CD4-positive, alpha-beta T cell (primary cell): ENCODE measurements at regions of chr6 and their contacts with region 1.

Region 1: DNA sequence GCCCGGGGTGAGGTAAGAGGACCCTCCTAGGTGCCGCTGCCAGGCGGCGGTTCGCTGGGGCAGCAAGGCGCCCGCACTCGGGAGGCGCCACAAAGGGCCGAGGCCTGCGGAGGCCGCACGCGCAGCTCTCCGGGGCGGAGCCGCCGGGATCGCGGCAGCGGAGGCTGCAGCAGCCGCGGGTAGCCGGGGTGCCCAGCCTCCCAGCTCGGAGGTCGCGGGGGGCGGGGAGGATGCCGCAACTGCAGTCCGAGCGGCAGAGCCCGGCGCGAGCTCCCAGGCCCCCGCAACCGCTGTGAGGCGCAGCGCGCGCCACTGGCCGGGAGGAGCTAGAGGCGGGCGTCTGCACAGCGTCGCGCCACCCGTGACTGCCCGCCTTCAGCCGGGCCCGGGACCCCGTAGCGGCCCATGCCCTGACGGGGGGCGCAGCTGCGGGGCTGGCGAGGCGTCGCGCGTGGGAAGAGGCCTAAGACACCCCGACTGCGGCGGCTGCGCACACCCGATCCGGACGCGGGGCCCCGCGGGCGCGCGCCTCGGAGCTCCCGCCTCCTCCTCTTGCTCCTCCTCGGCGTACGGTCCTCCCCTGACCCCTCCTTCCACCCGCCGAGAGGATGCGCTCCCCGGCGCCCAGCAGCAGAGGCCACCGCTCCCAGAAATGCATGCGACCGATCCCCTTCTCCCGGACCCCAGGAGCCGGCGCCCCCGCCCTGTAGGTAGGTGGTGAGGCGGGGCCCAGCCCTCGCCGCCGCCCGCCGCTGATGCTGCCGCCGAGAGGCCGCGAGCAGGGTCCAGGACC is at the start of gene NCOA7:
- DNase-seq: peak; percentile 68 to 91 (median 79)
- ATAC-seq: peak; percentile 74
- H3K4me3 ChIP-seq: peak within 1 kb of the TSS; percentile 83
- H3K4me3 Mint-ChIP-seq: peak within 1 kb of the TSS; percentile 94
- H3K27ac ChIP-seq: peak within 1 kb of the TSS; percentile 82 to 86
- H3K27ac Mint-ChIP-seq: peak within 1 kb of the TSS; percentile 99
- H3K4me1 ChIP-seq: peaks cover 25% of the 10 kb centered on the region
- H3K4me1 Mint-ChIP-seq: peaks cover 61% of the 10 kb centered on the region
- H3K27me3 ChIP-seq: no peaks in the 10 kb centered on the region
- H3K27me3 Mint-ChIP-seq: no peaks in the 10 kb centered on the region
- CTCF ChIP-seq: no peak
- total RNA-seq, gene NCOA7: 34.6 to 35.7 TPM

Region 2: GRCh38 chr6:124530926-124531325 is 1259.6 kb before region 1 on chr6:
- CTCF ChIA-PET with region 1: no interaction called
- POLR2A ChIA-PET with region 1: no interaction called
- intact Hi-C with region 1: no loop called
- DNase-seq: peak in 1 of 14 experiments; percentile 1
- ATAC-seq: no peak
- H3K4me3 ChIP-seq: no peak overlapping the region
- H3K4me3 Mint-ChIP-seq: no peak overlapping the region
- H3K27ac ChIP-seq: no peak overlapping the region
- H3K27ac Mint-ChIP-seq: no peak overlapping the region
- H3K4me1 ChIP-seq: no peaks in the 10 kb centered on the region
- H3K4me1 Mint-ChIP-seq: no peaks in the 10 kb centered on the region
- H3K27me3 ChIP-seq: no peaks in the 10 kb centered on the region
- H3K27me3 Mint-ChIP-seq: no peaks in the 10 kb centered on the region
- CTCF ChIP-seq: no peak

Region 3: GRCh38 chr6:125301435-125302391 is 488.8 kb before region 1 on chr6 and contains the start of gene HDDC2:
- CTCF ChIA-PET with region 1: interaction called, 5 read pairs
- POLR2A ChIA-PET with region 1: interaction called, 44 read pairs
- intact Hi-C with region 1: no loop called
- DNase-seq: peak in 13 of 14 experiments; percentile 9 to 67 (median 37)
- ATAC-seq: peak; percentile 33
- H3K4me3 ChIP-seq: peak within 1 kb of the TSS; percentile 64
- H3K4me3 Mint-ChIP-seq: peak within 1 kb of the TSS; percentile 91
- H3K27ac ChIP-seq: peak within 1 kb of the TSS; percentile 66 to 70
- H3K27ac Mint-ChIP-seq: peak within 1 kb of the TSS; percentile 90
- H3K4me1 ChIP-seq: peaks cover 32% of the 10 kb centered on the region
- H3K4me1 Mint-ChIP-seq: peaks cover 64% of the 10 kb centered on the region
- H3K27me3 ChIP-seq: no peaks in the 10 kb centered on the region
- H3K27me3 Mint-ChIP-seq: peaks cover 5% of the 10 kb centered on the region
- CTCF ChIP-seq: no peak
- total RNA-seq, gene HDDC2: 19.4 to 21.6 TPM

Region 4: DNA sequence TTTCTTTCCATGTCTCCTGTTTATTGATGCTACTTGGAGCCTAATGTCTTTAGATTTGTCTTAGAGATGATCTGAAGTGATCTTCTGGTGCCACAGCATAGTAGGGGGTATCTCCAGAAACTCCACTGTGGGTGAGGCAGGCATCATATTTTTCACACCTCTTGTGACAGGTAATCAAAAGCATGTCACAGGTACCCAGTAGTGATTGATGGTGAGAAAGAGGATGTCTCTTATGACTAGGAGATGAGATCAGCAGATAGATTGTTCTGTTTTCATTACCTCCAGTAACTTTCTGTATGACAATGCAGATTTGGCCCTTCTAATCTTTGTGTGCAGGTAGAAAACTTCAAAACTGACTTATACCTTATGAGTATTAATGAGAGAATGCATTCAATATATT is 13.7 kb after region 1 on chr6:
- CTCF ChIA-PET with region 1: interaction called, 7 read pairs
- POLR2A ChIA-PET with region 1: interaction called, 13 read pairs
- intact Hi-C with region 1: no loop called
- DNase-seq: peak in 4 of 14 experiments; percentile 6 to 57 (median 42)
- ATAC-seq: peak; percentile 68
- H3K4me3 ChIP-seq: no peak overlapping the region
- H3K4me3 Mint-ChIP-seq: peak overlapping the region; percentile 2
- H3K27ac ChIP-seq: no peak overlapping the region
- H3K27ac Mint-ChIP-seq: peak overlapping the region; percentile 14
- H3K4me1 ChIP-seq: peaks cover 20% of the 10 kb centered on the region
- H3K4me1 Mint-ChIP-seq: peaks cover 66% of the 10 kb centered on the region
- H3K27me3 ChIP-seq: no peaks in the 10 kb centered on the region
- H3K27me3 Mint-ChIP-seq: no peaks in the 10 kb centered on the region
- CTCF ChIP-seq: no peak

Region 5: DNA sequence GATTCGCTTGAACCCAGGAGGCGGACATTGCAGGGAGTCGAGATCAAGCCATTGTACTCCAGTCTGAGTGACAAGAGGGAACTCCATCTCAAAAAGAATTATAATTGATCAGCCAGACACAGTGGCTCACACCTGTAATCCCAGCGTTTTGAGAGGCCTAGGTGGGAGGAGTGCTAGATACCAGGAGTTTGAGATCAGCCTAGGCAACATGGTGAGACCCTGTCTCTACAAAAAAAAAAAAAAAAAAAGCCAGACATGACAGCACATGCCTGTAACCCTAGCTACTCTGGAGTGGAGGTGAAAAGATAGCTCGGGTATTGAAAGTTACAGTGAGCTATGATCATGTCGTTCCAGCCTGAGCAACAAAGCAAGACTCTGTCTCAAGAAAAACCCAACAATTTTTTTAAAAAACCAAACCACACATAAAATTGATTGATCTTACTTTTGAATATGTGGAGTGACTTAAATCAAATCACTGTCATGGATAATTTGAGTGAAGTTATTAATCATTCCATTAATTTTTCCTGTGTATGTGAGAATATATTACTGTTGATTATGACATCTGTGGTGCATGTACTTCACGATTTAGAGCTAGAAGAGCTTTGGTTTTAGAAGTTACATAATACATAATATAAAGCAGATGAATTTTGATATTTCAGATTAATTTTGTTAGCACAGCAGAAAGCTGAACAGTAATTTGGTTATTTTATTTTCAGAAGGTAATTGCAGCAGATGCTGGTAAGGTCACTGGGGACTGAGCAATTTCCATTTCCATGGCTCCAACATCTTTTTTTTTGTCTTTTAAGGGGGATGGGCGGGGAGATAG is 34.6 kb after region 1 on chr6:
- CTCF ChIA-PET with region 1: interaction called, 7 read pairs
- POLR2A ChIA-PET with region 1: interaction called, 109 read pairs
- intact Hi-C with region 1: loop called in 1 of 2 experiments (anchors 2 kb)
- DNase-seq: no peak
- ATAC-seq: no peak
- H3K4me3 ChIP-seq: no peak overlapping the region
- H3K4me3 Mint-ChIP-seq: no peak overlapping the region
- H3K27ac ChIP-seq: no peak overlapping the region
- H3K27ac Mint-ChIP-seq: peak overlapping the region; percentile 66
- H3K4me1 ChIP-seq: peaks cover 22% of the 10 kb centered on the region
- H3K4me1 Mint-ChIP-seq: peaks cover 50% of the 10 kb centered on the region
- H3K27me3 ChIP-seq: no peaks in the 10 kb centered on the region
- H3K27me3 Mint-ChIP-seq: no peaks in the 10 kb centered on the region
- CTCF ChIP-seq: no peak

Region 6: DNA sequence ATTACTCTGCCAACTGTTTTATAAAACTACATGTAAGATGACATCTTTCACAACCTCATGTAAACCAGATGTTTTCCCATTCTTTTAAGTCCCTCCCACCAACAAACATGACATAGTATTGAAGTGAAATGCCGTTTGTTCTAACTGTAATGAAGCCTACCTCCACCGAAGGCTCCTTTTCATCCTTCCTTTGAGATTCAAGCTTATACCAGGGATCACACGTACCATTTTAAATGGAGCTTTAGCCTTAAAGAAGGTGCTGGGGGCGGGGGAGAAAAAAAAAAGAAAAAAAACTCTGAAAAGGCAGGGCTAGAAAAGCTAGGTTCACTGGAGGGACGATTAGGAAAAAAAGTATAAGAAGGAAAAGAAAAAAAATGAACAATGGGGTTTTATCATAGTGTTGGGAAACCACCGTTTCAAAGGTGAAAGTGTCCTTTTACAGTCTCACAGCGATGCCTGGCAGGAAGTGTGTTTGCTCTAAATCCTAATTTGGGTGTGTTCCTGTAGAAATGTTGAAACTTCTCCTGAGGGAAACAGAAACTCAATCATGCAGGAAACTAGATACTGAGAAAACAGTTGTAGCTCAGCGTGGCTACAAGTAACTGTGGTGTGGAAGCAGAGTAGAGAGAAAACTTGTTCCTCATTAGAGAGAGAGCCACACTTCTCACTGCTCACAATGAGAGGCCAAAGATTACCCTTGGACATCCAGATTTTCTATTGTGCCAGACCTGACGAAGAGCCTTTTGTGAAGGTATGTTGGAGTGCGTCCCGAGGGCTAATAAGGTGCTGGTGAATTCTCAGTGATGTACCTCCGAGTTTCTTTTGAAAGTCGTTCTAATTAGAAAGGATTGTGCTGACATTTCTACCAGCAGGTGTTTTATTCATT is 128.4 kb after region 1 on chr6:
- CTCF ChIA-PET with region 1: no interaction called
- POLR2A ChIA-PET with region 1: interaction called, 40 read pairs
- intact Hi-C with region 1: loop called in 1 of 2 experiments (anchors 5 kb)
- DNase-seq: peak in 8 of 14 experiments; percentile 5 to 88 (median 26)
- ATAC-seq: peak; percentile 95
- H3K4me3 ChIP-seq: peak overlapping the region; percentile 30
- H3K4me3 Mint-ChIP-seq: peak overlapping the region; percentile 79
- H3K27ac ChIP-seq: peak overlapping the region; percentile 36 to 76
- H3K27ac Mint-ChIP-seq: peak overlapping the region; percentile 84
- H3K4me1 ChIP-seq: peaks cover 13% of the 10 kb centered on the region
- H3K4me1 Mint-ChIP-seq: peaks cover 33% of the 10 kb centered on the region
- H3K27me3 ChIP-seq: no peaks in the 10 kb centered on the region
- H3K27me3 Mint-ChIP-seq: no peaks in the 10 kb centered on the region
- CTCF ChIP-seq: no peak

Region 7: GRCh38 chr6:125974214-125974866 is 183.8 kb after region 1 on chr6:
- CTCF ChIA-PET with region 1: interaction called, 3 read pairs
- POLR2A ChIA-PET with region 1: interaction called, 13 read pairs
- intact Hi-C with region 1: no loop called
- DNase-seq: peak in 3 of 14 experiments; percentile 63 to 67 (median 65)
- ATAC-seq: peak; percentile 84
- H3K4me3 ChIP-seq: no peak overlapping the region
- H3K4me3 Mint-ChIP-seq: no peak overlapping the region
- H3K27ac ChIP-seq: no peak overlapping the region
- H3K27ac Mint-ChIP-seq: no peak overlapping the region
- H3K4me1 ChIP-seq: no peaks in the 10 kb centered on the region
- H3K4me1 Mint-ChIP-seq: peaks cover 16% of the 10 kb centered on the region
- H3K27me3 ChIP-seq: no peaks in the 10 kb centered on the region
- H3K27me3 Mint-ChIP-seq: no peaks in the 10 kb centered on the region
- CTCF ChIP-seq: peak; percentile 67